CD8-positive, alpha-beta T cell (primary cell): ENCODE measurements at regions of chr11 and their contacts with region 1.

Region 1: GRCh38 chr11:100622404-100622803 is 64.7 kb upstream of the ARHGAP42 start:
- DNase-seq: no peak
- ATAC-seq: no peak
- H3K4me3 ChIP-seq: no peak overlapping the region
- H3K4me3 Mint-ChIP-seq: no peak overlapping the region
- H3K27ac ChIP-seq: no peak overlapping the region
- H3K27ac Mint-ChIP-seq: no peak overlapping the region
- H3K4me1 ChIP-seq: no peaks in the 10 kb centered on the region
- H3K4me1 Mint-ChIP-seq: no peaks in the 10 kb centered on the region
- H3K27me3 ChIP-seq: no peaks in the 10 kb centered on the region
- H3K27me3 Mint-ChIP-seq: no peaks in the 10 kb centered on the region
- CTCF ChIP-seq: no peak

Region 2: GRCh38 chr11:99865951-99866350 is 756.5 kb before region 1 on chr11:
- CTCF ChIA-PET with region 1: no interaction called
- POLR2A ChIA-PET with region 1: no interaction called
- intact Hi-C with region 1: no loop called
- DNase-seq: no peak
- ATAC-seq: no peak
- H3K4me3 ChIP-seq: no peak overlapping the region
- H3K4me3 Mint-ChIP-seq: no peak overlapping the region
- H3K27ac ChIP-seq: no peak overlapping the region
- H3K27ac Mint-ChIP-seq: no peak overlapping the region
- H3K4me1 ChIP-seq: no peaks in the 10 kb centered on the region
- H3K4me1 Mint-ChIP-seq: no peaks in the 10 kb centered on the region
- H3K27me3 ChIP-seq: no peaks in the 10 kb centered on the region
- H3K27me3 Mint-ChIP-seq: no peaks in the 10 kb centered on the region
- CTCF ChIP-seq: no peak

Region 3: DNA sequence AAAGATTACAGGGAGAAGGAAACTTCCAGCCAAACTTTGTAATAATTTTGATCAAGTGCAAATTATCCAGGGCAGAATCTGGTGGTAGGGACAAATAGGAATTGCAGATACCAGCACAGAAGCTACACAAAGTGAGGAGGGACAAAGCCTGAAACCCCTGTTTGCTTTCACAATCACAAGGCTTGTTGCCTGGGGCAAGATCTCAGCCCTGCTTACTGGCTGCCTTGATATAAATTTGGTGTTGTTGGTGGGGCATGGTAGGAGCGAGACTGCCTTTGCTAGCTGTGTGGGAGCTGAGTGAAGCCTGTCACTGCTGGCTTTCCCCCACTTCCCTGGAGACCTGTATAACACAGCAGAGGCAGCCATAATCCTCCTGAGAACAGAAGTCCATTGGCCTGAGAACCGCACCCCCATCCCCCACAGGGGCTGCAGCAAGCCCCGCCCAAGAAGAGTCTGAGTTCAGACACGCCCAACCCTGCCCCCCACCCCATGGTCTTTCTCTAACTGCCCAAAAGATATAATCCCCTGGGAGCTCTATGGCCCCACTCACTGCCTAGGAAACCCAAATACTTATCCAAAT is 25.4 kb after region 1 on chr11:
- CTCF ChIA-PET with region 1: no interaction called
- POLR2A ChIA-PET with region 1: no interaction called
- intact Hi-C with region 1: loop called in 1 of 2 experiments (anchors 2 kb)
- DNase-seq: no peak
- ATAC-seq: no peak
- H3K4me3 ChIP-seq: no peak overlapping the region
- H3K4me3 Mint-ChIP-seq: no peak overlapping the region
- H3K27ac ChIP-seq: no peak overlapping the region
- H3K27ac Mint-ChIP-seq: no peak overlapping the region
- H3K4me1 ChIP-seq: no peaks in the 10 kb centered on the region
- H3K4me1 Mint-ChIP-seq: no peaks in the 10 kb centered on the region
- H3K27me3 ChIP-seq: no peaks in the 10 kb centered on the region
- H3K27me3 Mint-ChIP-seq: peaks cover 6% of the 10 kb centered on the region
- CTCF ChIP-seq: no peak